Colonic mucosa (tissue), 4 donors: ENCODE measurements at regions of chr7 and their contacts with region 1.

Region 1: DNA sequence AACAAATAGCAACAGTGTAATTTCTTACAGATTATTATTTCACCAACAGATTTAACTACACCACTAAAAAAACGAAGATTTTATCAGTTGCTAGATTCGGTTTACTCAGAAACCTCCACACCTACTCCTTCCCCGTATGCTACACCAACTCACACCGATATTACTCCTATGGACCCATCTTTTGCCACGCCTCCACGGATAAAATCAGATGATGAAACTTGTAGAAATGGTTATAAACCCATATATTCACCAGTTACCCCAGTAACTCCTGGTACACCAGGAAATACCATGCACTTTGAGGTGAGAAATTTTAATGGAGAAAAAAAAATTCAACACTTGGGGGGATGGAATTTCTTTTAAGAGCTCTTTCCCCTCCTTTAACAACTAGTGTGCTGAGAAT is 92.5 kb downstream of the KMT2E start:
- DNase-seq: no peak
- H3K4me3 ChIP-seq: no peak overlapping the region
- H3K27ac ChIP-seq: no peak overlapping the region
- H3K4me1 ChIP-seq: no peaks in the 10 kb centered on the region
- H3K27me3 ChIP-seq: no peaks in the 10 kb centered on the region
- CTCF ChIP-seq: no peak

Region 2: DNA sequence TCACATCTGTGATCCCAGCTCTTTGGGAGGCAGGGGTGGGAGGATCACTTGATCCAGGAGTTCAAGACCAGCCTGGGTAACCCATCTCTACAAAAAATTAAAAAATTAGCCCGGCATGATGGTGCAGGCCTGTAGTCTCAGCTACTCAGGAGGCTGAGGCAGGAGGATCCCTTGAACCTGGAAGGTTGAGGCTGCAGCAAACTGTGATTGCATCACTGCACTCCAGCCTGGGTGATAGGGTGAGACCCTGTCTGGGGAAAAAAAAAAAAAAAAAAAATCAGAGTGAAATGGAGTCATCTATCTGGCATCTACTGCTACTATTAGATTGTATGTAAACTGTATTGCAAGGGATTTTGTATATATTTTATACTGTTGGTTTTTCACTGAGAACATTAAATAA is 33.3 kb before region 1 on chr7:
- intact Hi-C with region 1: loop called (anchors 5 kb)
- DNase-seq: no peak
- H3K4me3 ChIP-seq: no peak overlapping the region
- H3K27ac ChIP-seq: no peak overlapping the region
- H3K4me1 ChIP-seq: no peaks in the 10 kb centered on the region
- H3K27me3 ChIP-seq: no peaks in the 10 kb centered on the region
- CTCF ChIP-seq: no peak